ENCODE measurements at regions of chr3 and their contacts with region 1.

Region 1: DNA sequence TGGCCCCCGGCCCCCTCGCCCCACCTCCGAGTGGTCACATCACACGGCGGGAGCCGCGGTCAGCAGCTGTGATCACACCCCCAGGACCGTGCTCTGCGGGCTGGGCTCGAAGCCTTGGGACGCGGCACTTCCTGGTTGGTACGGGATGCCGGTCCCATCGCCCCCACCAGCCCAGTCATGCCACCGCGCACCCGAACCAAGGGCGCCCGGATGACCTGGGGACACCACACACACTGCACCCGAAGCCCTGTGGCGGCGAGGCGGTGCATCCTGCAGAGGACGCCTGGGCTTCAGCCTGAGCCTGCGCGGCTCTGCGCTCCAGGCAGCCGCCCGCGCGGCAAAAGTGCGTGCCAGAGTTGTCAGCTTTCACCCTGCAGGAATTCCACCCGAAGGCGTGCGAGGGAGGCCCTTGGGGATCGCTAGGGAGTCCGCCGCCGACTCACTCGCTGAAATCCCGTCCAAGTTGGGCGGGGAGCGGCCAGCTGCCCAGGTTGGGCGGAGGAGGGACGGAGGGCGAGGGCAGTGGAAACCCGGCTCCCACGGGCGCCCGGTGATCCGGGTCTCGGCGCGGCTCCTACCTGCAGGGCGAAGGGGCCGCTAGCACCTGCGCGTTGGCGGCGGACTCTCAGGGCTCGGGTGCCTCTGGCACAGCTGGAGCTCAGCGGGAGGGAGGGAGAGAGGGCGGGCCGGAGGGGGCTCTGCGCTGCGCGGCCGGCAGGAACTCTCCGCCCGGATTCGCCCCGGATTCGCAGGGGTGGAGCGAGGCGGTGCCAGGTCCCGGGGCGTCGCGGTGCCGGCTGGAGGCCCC is at the start of gene PLD1:
- DNase-seq: peak; percentile 77
- ATAC-seq: peak; percentile 87
- H3K4me3 ChIP-seq: peak within 1 kb of the TSS; percentile 73 to 91 (median 85)
- H3K27ac ChIP-seq: peak within 1 kb of the TSS; percentile 96
- H3K4me1 ChIP-seq: peaks cover 62% of the 10 kb centered on the region
- H3K27me3 ChIP-seq: no peaks in the 10 kb centered on the region; a peak in 1 of 5 replicates
- CTCF ChIP-seq: peak; percentile 38
- EP300 ChIP-seq: peak in 1 of 2 experiments; percentile 66; a peak in 1 of 4 replicates
- POLR2A ChIP-seq: peak in 1 of 2 experiments; percentile 75; a peak in 2 of 4 replicates
- RAD21 ChIP-seq: peak; percentile 40
- total RNA-seq, gene PLD1: 27.1 and 33.6 TPM in 2 replicates

Region 2: DNA sequence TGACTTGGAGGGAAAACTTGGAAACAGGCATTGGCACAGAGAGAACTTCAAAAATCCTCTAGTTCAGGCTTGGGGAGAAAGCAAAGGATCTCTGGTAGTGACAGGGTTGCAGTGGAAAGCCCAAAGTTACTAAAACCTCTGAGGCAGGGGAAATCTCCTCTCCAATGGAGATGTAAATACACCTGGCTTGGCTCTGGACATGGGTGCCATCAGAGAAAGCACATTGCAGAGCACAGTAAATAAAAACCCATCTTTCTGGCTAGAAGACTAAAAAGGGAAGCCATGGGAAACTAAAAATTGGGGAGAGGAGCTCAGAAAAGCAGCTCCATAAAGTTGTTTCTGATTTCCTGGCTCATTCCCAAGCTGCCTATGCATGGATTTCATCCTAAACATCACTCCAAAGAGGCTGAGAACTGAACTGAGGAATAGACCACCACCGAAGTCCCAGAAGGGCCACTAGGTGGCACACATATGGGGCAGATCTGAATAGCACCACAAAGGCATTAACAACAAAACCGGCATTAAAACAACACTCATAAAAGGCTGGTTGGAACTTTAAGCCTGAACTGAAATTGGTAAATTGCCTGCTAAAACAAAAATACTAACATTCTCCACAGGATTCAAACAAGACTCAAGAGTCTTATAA is 106.1 kb before region 1 on chr3:
- CTCF ChIA-PET with region 1: no interaction called
- POLR2A ChIA-PET with region 1: no interaction called
- in situ Hi-C with region 1: no loop called
- intact Hi-C with region 1: no loop called
- DNase-seq: peak; percentile 9
- ATAC-seq: no peak; the same call in 2 of the 3 replicates
- H3K4me3 ChIP-seq: no peak overlapping the region
- H3K27ac ChIP-seq: no peak overlapping the region
- H3K4me1 ChIP-seq: no peaks in the 10 kb centered on the region
- H3K27me3 ChIP-seq: no peaks in the 10 kb centered on the region
- CTCF ChIP-seq: 0 out of 2 replicates have a peak, but pooled peaks have one; percentile 26
- EP300 ChIP-seq: no peak
- POLR2A ChIP-seq: no peak
- RAD21 ChIP-seq: no peak

Region 3: GRCh38 chr3:171765511-171765887 is 44.5 kb before region 1 on chr3:
- CTCF ChIA-PET with region 1: no interaction called
- POLR2A ChIA-PET with region 1: no interaction called
- in situ Hi-C with region 1: no loop called
- intact Hi-C with region 1: no loop called
- DNase-seq: no peak
- ATAC-seq: no peak
- H3K4me3 ChIP-seq: no peak overlapping the region
- H3K27ac ChIP-seq: no peak overlapping the region
- H3K4me1 ChIP-seq: peaks cover 10% of the 10 kb centered on the region
- H3K27me3 ChIP-seq: no peaks in the 10 kb centered on the region
- CTCF ChIP-seq: no peak
- EP300 ChIP-seq: no peak
- POLR2A ChIP-seq: no peak
- RAD21 ChIP-seq: no peak

Region 4: DNA sequence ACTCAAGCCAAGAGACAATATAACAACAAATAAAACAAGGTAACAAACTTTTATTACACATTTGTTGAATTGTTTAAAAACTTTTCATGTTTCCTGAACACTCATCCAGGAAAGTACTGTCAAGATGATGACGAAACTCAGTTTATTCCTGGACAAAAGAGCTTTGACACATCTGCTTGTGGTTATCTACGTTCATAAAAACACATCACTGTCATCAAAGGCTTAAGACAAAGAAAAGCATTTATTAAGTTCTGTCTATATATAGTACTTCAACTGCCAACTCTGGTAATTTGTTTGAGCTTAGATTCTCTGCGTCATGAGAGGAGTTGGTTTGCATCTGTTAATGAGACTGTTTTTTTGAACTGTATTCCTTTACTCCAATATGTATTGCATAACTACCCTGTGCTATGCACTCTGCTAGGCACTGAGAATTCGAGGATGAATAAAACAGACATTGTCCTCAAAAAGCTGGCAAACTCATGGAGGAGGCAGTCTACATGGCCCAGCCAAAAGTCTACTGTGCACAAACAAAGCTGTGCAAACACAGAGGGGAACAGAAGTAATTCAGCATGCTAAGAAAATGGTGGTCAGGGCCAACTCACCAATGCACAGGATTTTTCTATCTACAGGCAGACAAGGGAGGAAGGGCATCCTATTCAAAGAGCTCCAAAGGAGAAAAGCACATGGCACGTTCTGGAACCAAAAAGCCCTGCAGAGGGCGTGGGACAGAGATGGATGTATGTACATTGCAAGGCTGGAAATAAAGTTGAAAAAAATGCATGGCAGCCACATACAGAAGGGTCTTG is 21.3 kb before region 1 on chr3:
- CTCF ChIA-PET with region 1: no interaction called
- POLR2A ChIA-PET with region 1: interaction called, 12 read pairs
- in situ Hi-C with region 1: no loop called
- intact Hi-C with region 1: no loop called
- DNase-seq: peak; percentile 63
- ATAC-seq: no peak
- H3K4me3 ChIP-seq: no peak overlapping the region
- H3K27ac ChIP-seq: peak overlapping the region; percentile 30
- H3K4me1 ChIP-seq: peaks cover 93% of the 10 kb centered on the region
- H3K27me3 ChIP-seq: no peaks in the 10 kb centered on the region
- CTCF ChIP-seq: no peak
- EP300 ChIP-seq: 0 out of 4 replicates have a peak, but pooled peaks of 1 of the 2 experiments have one; percentile 16
- POLR2A ChIP-seq: no peak
- RAD21 ChIP-seq: no peak

Region 5: DNA sequence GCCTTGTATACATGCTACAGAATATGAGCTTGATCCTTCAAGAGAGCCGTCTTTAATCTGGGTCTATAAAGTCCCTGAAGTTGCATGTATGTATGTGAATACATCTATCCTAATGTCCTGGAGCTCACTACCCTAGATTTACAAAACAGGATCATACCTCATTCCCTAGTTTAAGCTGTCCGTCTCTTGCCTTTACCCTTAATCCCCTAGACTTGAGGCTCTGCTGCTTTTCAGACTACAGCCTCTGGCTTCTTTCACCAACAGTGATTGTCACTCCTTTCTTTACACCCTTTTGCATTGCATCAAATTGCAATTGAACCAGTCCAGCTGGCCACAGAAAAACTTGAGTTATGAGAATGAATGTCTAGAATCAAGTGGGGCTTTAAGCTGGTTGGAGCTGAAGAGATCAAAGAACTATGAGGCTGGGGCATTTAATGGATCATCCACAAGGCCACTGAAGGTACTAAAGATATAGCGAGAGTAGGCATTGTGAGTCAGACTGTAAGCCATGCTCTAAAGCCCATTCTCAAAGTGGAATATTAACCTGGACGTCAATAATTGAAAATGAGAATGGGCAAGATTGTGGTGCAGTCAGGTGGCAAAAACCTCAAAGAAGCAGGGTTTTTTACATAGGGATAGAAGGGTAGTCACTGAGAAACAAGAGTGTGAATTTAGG is 12.5 kb after region 1 on chr3:
- CTCF ChIA-PET with region 1: no interaction called
- POLR2A ChIA-PET with region 1: interaction called, 59 read pairs
- in situ Hi-C with region 1: no loop called
- intact Hi-C with region 1: loop called (anchors 2 kb)
- DNase-seq: peak; percentile 83
- ATAC-seq: peak; percentile 92
- H3K4me3 ChIP-seq: no peak overlapping the region; a peak in 1 of 6 replicates
- H3K27ac ChIP-seq: peak overlapping the region; percentile 54
- H3K4me1 ChIP-seq: peaks cover 73% of the 10 kb centered on the region
- H3K27me3 ChIP-seq: no peaks in the 10 kb centered on the region
- CTCF ChIP-seq: no peak
- EP300 ChIP-seq: peak in 1 of 2 experiments; percentile 40; a peak in 1 of 4 replicates
- POLR2A ChIP-seq: no peak
- RAD21 ChIP-seq: no peak

Region 6: GRCh38 chr3:171967137-171967783 is 157.2 kb after region 1 on chr3:
- CTCF ChIA-PET with region 1: no interaction called
- POLR2A ChIA-PET with region 1: interaction called, 11 read pairs
- in situ Hi-C with region 1: no loop called
- intact Hi-C with region 1: no loop called
- DNase-seq: peak; percentile 96
- ATAC-seq: peak; percentile 89
- H3K4me3 ChIP-seq: no peak overlapping the region; a peak in 1 of 6 replicates
- H3K27ac ChIP-seq: peak overlapping the region; percentile 90
- H3K4me1 ChIP-seq: peaks cover 69% of the 10 kb centered on the region
- H3K27me3 ChIP-seq: no peaks in the 10 kb centered on the region
- CTCF ChIP-seq: no peak
- EP300 ChIP-seq: peak in 1 of 2 experiments; percentile 99; a peak in 3 of 4 replicates
- POLR2A ChIP-seq: 0 out of 4 replicates have a peak, but pooled peaks of 1 of the 2 experiments have one; percentile 55
- RAD21 ChIP-seq: no peak

Region 7: DNA sequence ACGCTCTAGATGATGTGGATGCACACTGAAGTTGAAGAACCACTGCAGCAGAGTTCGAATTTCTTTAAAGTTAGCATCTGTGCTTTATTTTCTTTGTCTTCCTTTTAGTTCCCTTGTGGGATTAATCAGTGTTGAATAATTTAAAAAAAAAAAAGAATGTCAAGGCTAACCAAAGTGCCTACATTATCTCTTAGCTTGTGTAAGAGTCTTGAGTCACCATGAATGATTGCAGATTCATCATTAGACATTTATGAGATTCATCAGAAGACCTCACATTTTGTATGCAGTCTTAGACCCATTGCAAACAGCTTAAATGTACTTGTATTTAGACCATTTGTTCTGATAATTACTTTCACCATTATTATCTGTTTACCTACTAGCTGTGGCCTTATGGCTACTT is 411.5 kb after region 1 on chr3:
- CTCF ChIA-PET with region 1: no interaction called
- POLR2A ChIA-PET with region 1: no interaction called
- in situ Hi-C with region 1: no loop called
- intact Hi-C with region 1: no loop called
- DNase-seq: no peak
- ATAC-seq: no peak
- H3K4me3 ChIP-seq: no peak overlapping the region
- H3K27ac ChIP-seq: no peak overlapping the region
- H3K4me1 ChIP-seq: peaks cover 91% of the 10 kb centered on the region
- H3K27me3 ChIP-seq: no peaks in the 10 kb centered on the region
- CTCF ChIP-seq: no peak
- EP300 ChIP-seq: no peak
- POLR2A ChIP-seq: no peak
- RAD21 ChIP-seq: no peak

Measured in HepG2 (cell line).